ENCODE measurements at regions of chr15 and their contacts with region 1.

Region 1: DNA sequence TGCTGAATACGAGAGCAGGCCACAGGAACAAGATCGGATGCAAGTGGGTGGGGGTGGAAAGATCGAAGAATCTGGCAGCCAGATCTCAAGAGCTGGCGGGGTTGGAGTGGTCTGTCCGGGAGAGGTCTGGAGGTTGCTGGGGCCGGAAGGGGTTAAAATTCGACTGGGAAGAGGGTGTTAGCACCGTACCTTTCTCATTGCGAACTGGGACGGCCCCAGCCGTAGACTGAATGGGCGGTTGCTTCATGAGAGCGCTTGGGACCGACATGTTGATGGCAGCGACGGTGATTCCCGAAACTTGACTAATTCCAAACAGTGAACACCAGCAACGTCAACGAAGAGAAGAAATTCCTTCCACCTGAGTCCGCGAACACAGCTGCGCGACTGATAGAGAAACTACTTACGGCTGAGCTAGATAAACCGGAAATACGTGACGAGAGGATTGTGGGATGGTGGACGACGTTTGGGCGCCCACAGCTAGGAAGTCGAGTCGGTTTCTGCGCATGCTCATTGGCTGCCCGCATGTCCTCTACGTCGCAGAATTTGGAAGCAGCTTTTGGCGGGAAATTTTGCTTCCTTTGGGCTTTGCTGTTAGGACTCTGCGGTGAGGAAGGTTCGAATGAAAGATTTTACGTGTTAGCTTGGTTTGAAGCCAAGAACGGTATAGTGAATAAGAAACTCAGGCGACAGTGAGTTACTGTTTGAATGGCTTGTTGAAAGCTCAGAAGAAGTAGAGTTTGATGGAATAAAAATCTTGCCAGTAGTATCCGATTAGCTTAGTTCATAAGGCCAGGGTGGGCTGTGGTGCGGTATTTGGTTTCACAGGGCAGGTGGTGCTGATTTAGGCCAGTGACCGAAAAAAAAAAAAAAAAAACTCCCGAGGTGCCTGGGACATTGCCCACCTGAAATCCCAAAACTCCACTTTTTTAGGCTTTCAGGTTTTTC is at the start of gene MFAP1:
- DNase-seq: peak; percentile 72 to 83
- H3K4me3 ChIP-seq: peak within 1 kb of the TSS; percentile 63 to 98 (median 90)
- H3K27ac ChIP-seq: peak within 1 kb of the TSS; percentile 90
- H3K4me1 ChIP-seq: peaks cover 0 to 4% (median 2%) of the 10 kb centered on the region in 4 experiments; a peak in 4 of 7 replicates
- H3K27me3 ChIP-seq: peaks cover 0 to 16% (median 4%) of the 10 kb centered on the region in 4 experiments; a peak in 4 of 7 replicates
- CTCF ChIP-seq: no peak
- EP300 ChIP-seq: no peak
- POLR2A ChIP-seq: peak; percentile 48 to 94
- RAD21 ChIP-seq: no peak
- total RNA-seq, gene MFAP1: 36.6 and 36.7 TPM in 2 replicates

Region 2: GRCh38 chr15:43791993-43792760 is 32.4 kb before region 1 on chr15 and contains the start of gene SERF2:
- CTCF ChIA-PET with region 1: no interaction called
- POLR2A ChIA-PET with region 1: interaction called, 22 read pairs
- DNase-seq: peak; percentile 99 to 100
- H3K4me3 ChIP-seq: peak within 1 kb of the TSS; percentile 86 to 97 (median 95)
- H3K27ac ChIP-seq: peak within 1 kb of the TSS; percentile 95
- H3K4me1 ChIP-seq: peaks cover 19 to 27% (median 22%) of the 10 kb centered on the region in 4 experiments; a peak in 6 of 7 replicates
- H3K27me3 ChIP-seq: no peaks in the 10 kb centered on the region
- CTCF ChIP-seq: no peak
- EP300 ChIP-seq: no peak
- POLR2A ChIP-seq: peak; percentile 98 to 99
- RAD21 ChIP-seq: no peak
- total RNA-seq, gene SERF2: 655 and 672 TPM in 2 replicates

Region 3: DNA sequence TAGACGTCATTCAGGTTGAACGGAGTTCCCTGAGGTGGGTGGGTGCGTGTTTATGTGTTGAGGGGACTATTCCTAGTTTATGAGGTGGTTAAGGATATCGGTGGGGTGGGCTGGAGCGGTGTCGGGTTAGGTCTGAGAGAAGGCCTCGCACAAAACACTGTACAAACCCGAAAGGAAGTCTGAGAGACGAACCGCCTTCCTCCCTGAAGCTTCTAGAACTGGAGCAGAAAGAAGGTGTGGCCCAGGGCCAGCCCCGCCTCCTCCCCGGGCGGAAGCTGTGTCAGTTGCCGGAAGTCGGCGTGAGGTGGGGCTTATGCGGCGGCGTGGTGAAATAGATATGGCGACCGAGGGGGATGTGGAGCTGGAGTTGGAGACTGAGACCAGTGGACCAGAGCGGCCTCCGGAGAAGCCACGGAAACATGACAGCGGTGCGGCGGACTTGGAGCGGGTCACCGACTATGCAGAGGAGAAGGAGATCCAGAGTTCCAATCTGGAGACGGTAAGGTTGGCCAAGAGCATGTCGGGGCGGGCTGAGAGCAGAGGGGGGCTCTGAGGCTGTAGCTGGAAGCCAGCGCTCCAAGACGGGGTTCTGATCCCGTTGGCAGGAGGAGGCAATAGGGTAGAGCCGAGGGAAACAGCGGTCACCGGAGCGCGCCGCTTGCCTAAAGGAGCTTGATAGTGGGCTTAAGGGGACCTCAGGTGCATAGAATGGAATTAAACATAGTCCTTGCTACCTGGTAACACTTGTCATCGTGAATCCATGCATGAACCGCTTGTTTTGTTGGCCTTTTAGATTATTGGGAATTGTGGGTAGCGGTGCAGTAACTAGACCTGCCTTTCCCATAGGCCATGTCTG is 24.1 kb before region 1 on chr15 and contains the start of gene HYPK:
- CTCF ChIA-PET with region 1: no interaction called
- POLR2A ChIA-PET with region 1: interaction called, 22 read pairs
- DNase-seq: peak; percentile 41 to 88
- H3K4me3 ChIP-seq: peak within 1 kb of the TSS; percentile 67 to 97 (median 88)
- H3K27ac ChIP-seq: peak within 1 kb of the TSS; percentile 28; the same call in 1 of the 2 replicates
- H3K4me1 ChIP-seq: peaks cover 7 to 16% (median 11%) of the 10 kb centered on the region in 4 experiments
- H3K27me3 ChIP-seq: no peaks in the 10 kb centered on the region
- CTCF ChIP-seq: no peak
- EP300 ChIP-seq: no peak
- POLR2A ChIP-seq: peak; percentile 2 to 82
- RAD21 ChIP-seq: no peak
- total RNA-seq, gene HYPK: 9.9 and 17.6 TPM in 2 replicates

Region 4: GRCh38 chr15:43893956-43894355 is 69.4 kb after region 1 on chr15:
- CTCF ChIA-PET with region 1: no interaction called
- POLR2A ChIA-PET with region 1: no interaction called
- DNase-seq: no peak
- H3K4me3 ChIP-seq: no peak overlapping the region
- H3K27ac ChIP-seq: no peak overlapping the region
- H3K4me1 ChIP-seq: peaks cover 0 to 2% (median 0%) of the 10 kb centered on the region in 4 experiments; a peak in 1 of 7 replicates
- H3K27me3 ChIP-seq: no peaks in the 10 kb centered on the region
- CTCF ChIP-seq: no peak
- EP300 ChIP-seq: no peak
- POLR2A ChIP-seq: no peak
- RAD21 ChIP-seq: no peak

Measured in H1 (cell line).